IMR-90 (cell line): ENCODE measurements at regions of chr10 and their contacts with region 1.

Region 1: DNA sequence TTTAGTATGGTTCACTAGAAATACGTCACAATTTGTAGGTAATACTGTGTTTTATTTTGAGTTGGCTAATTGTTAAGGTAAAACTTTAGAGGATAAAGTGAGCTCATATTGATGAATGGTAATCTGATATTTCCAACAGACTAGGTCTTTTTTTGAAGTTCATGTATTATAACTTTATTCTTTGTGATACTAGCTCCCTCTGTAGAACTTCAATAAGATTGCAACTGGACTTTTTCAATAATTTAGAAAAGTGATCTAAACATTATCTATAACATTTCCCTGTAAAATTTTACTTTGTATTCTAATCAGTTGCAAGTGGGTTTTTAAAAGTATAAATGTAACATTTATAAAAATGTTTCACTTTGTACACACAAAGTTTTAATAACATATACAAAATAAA is 83.5 kb downstream of the ADK start:
- DNase-seq: peak; percentile 33
- ATAC-seq: peak; percentile 49; the same call in 1 of the 2 replicates
- H3K4me3 ChIP-seq: no peak overlapping the region
- H3K27ac ChIP-seq: no peak overlapping the region
- H3K4me1 ChIP-seq: no peaks in the 10 kb centered on the region
- H3K27me3 ChIP-seq: no peaks in the 10 kb centered on the region
- CTCF ChIP-seq: peak; percentile 56
- POLR2A ChIP-seq: no peak
- RAD21 ChIP-seq: peak; percentile 52

Region 2: DNA sequence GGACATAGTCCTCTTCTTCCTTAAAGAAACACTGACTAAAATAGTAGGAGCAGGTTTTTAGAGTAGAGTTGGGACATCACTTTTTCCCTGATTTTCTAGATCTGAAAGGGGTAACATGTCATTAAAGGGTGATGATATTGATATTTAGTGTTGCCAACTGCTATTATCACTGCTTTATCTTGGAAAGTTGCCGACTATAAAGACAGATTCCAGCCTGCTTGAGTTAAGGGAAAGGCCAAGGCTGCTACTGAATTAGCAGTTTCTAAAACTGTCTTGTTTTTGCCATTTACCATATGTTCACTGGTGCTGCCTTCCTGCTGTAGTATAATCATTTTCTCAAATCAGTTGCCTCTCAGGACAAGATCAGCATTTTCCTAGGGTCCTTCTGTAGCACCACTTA is 113.7 kb before region 1 on chr10:
- CTCF ChIA-PET with region 1: no interaction called
- POLR2A ChIA-PET with region 1: no interaction called
- dilution Hi-C with region 1: no loop called
- in situ Hi-C with region 1: no loop called
- intact Hi-C with region 1: loop called (anchors 2 kb)
- DNase-seq: no peak
- ATAC-seq: no peak
- H3K4me3 ChIP-seq: no peak overlapping the region
- H3K27ac ChIP-seq: no peak overlapping the region
- H3K4me1 ChIP-seq: peaks cover 10% of the 10 kb centered on the region
- H3K27me3 ChIP-seq: no peaks in the 10 kb centered on the region
- CTCF ChIP-seq: no peak
- POLR2A ChIP-seq: no peak
- RAD21 ChIP-seq: no peak

Region 3: DNA sequence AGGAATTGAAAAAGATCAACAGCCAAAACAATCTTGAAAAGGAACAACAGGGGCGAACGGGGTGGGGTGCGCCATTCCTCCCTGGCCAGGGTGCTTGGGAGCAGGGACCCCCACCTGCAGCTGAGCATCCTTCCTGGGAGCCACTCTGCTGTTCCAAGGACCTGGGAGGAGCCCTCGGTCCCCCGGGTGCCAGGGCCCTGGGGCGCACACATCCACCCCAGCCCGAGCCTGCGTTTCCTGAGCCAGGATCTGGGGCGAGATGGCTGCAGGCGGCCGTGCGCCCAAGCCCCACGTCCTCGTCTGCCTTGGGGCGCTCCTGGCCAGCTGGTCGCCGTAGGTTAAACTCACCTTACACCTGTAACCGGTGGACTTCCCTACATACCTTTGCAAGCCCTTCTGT is 94.6 kb before region 1 on chr10:
- CTCF ChIA-PET with region 1: interaction called, 3 read pairs
- POLR2A ChIA-PET with region 1: no interaction called
- dilution Hi-C with region 1: no loop called
- in situ Hi-C with region 1: loop called (anchors 5 kb)
- intact Hi-C with region 1: no loop called
- DNase-seq: no peak
- ATAC-seq: no peak
- H3K4me3 ChIP-seq: no peak overlapping the region
- H3K27ac ChIP-seq: no peak overlapping the region
- H3K4me1 ChIP-seq: peaks cover 1% of the 10 kb centered on the region
- H3K27me3 ChIP-seq: no peaks in the 10 kb centered on the region
- CTCF ChIP-seq: no peak
- POLR2A ChIP-seq: no peak
- RAD21 ChIP-seq: no peak

Region 4: DNA sequence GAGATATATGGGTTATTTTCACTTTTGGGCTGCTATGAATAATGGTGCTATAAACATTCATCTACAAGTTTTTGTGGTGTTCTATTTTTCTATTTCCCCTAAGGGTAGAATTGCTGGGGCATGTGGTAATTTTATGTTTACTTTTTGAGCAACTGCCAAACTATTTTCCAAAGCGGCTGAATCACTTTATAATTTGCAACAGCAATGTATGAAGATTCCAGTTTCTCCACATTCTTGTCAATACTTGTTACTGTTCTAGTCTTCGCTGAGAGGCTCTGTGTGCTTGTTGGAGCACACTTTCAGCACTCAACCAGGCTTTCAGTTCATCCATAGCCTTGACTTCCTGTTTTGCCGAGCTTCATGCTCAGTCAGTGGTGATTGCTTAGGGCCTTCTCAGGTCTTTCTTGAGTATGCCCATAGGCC is 44.6 kb before region 1 on chr10:
- CTCF ChIA-PET with region 1: interaction called, 4 read pairs
- POLR2A ChIA-PET with region 1: no interaction called
- dilution Hi-C with region 1: no loop called
- in situ Hi-C with region 1: no loop called
- intact Hi-C with region 1: loop called (anchors 5 kb)
- DNase-seq: peak; percentile 93
- ATAC-seq: peak; percentile 92
- H3K4me3 ChIP-seq: peak overlapping the region; percentile 28; the same call in 1 of the 2 replicates
- H3K27ac ChIP-seq: peak overlapping the region; percentile 87
- H3K4me1 ChIP-seq: peaks cover 6% of the 10 kb centered on the region
- H3K27me3 ChIP-seq: no peaks in the 10 kb centered on the region
- CTCF ChIP-seq: no peak
- POLR2A ChIP-seq: no peak; the same call in 1 of the 2 replicates
- RAD21 ChIP-seq: no peak